HepG2 (cell line): ENCODE measurements at regions of chr16 and their contacts with region 1.

Region 1: DNA sequence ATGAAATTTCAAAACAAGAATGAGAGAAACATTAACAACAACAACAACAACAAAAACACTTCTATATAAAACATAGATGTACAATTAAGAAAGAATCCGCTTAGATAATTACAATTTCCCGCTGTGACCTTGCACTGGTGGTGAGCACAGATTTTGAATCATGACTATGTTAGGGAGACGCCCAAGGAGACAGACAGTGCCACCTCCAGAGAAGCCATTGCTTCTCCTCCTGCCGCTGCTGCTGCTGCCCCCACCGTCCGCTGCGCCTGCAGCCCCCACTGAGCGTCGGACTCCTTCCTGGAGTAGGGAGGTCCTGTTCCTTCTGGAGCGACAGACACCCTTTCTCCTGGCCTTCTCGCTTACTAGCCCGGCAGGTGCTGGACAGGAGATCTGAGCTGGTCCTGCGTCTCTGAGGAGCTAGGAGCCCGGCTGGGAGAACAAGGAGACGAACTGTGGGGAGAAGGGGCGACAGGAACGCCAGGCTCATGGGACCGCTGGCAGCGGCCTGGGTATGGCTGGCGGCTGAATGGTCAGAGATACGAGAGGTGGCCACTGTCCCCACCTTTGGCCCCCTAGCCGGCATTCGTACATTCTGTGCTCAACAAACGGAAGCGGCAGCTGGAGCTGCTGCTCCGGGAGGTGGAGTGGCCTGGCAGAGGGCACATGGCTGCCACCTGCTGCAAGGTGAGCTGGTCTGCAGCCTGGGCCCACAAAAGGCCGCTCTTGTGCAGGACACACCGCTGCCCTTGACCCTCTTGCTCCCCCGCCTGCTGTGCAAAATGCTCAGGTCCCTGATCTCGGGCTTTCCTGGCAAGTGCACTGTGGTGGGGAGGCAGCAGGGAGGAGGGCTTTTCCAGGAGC is 2066.6 kb downstream of the TP53TG3F start:
- DNase-seq: no peak
- ATAC-seq: peak; percentile 93
- H3K4me3 ChIP-seq: peak overlapping the region in 1 of 3 experiments; percentile 4; a peak in 1 of 6 replicates
- H3K27ac ChIP-seq: no peak overlapping the region
- H3K4me1 ChIP-seq: no peaks in the 10 kb centered on the region
- H3K27me3 ChIP-seq: no peaks in the 10 kb centered on the region
- CTCF ChIP-seq: 0 out of 2 replicates have a peak, but pooled peaks have one; percentile 9
- EP300 ChIP-seq: no peak
- POLR2A ChIP-seq: no peak
- RAD21 ChIP-seq: no peak

Region 2: DNA sequence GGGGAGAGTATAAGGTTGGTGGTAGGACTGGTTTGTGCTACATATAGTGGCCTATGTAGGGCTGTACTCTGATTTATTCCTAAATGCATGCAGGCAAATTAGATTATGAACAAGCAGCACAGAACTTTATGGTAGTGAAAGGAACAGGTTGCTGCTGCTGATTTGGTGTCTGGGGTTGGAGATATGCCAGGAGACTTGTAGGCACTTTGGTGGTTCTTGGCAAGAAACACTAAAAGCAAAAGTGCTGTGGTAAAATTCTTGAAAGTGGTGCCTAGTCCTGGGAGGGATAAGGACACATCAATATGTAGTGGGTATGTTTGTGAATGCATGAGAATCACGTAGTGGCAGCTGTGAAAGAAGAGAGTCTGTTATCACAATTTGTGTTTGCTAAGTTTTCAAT is 59.4 kb after region 1 on chr16:
- CTCF ChIA-PET with region 1: no interaction called
- POLR2A ChIA-PET with region 1: no interaction called
- in situ Hi-C with region 1: no loop called
- intact Hi-C with region 1: loop called (anchors 10 kb)
- DNase-seq: no peak
- ATAC-seq: no peak
- H3K4me3 ChIP-seq: no peak overlapping the region
- H3K27ac ChIP-seq: no peak overlapping the region
- H3K4me1 ChIP-seq: no peaks in the 10 kb centered on the region
- H3K27me3 ChIP-seq: no peaks in the 10 kb centered on the region; a peak in 1 of 5 replicates
- CTCF ChIP-seq: no peak
- EP300 ChIP-seq: no peak
- POLR2A ChIP-seq: no peak
- RAD21 ChIP-seq: no peak